CD8-positive, alpha-beta T cell (primary cell): ENCODE measurements at regions of chr1 and their contacts with region 1.

Region 1: DNA sequence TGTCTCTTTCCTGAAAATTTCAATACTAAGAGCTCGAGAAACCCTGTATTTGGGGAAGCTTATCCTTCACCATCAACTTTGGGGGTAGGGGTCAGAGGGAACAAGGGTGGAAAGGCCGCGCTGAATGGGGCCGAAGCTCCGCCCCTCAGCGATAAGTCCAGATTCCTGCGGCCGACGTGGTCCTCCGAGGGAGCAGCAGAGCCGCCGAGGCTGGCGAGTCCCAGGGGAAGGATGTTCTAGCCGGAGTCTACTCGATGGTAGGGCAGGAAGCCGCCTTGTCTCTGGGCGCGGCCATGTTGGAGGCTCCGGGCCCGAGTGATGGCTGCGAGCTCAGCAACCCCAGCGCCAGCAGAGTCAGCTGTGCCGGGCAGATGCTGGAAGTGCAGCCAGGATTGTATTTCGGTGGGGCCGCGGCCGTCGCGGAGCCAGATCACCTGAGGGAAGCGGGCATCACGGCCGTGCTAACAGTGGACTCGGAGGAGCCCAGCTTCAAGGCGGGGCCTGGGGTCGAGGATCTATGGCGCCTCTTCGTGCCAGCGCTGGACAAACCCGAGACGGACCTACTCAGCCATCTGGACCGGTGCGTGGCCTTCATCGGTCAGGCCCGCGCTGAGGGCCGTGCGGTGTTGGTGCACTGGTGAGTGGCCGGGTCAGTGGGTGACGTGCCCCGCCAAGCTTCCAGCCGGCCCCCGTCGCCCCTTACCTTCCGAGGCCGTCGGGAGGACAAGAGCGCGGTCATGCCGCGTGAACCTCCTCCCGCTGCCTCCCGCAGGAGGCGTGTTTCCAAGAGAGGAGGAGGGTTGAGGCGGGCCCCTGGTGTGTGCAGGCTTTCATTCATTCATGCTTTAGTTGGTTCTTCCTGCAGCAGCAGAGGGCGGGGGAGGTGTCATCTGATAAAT is at the start of gene DUSP12:
- DNase-seq: peak; percentile 70 to 92 (median 85)
- ATAC-seq: peak; percentile 95
- H3K4me3 ChIP-seq: peak within 1 kb of the TSS; percentile 88 to 99
- H3K4me3 Mint-ChIP-seq: peak within 1 kb of the TSS; percentile 100
- H3K27ac ChIP-seq: peak within 1 kb of the TSS; percentile 68 to 76
- H3K27ac Mint-ChIP-seq: peak within 1 kb of the TSS; percentile 96
- H3K4me1 ChIP-seq: peaks cover 23% of the 10 kb centered on the region
- H3K4me1 Mint-ChIP-seq: peaks cover 41% of the 10 kb centered on the region
- H3K27me3 ChIP-seq: no peaks in the 10 kb centered on the region
- H3K27me3 Mint-ChIP-seq: peaks cover 6% of the 10 kb centered on the region
- CTCF ChIP-seq: no peak
- total RNA-seq, gene DUSP12: 27.9 to 31.1 TPM

Region 2: GRCh38 chr1:161738627-161739287 is 11.0 kb before region 1 on chr1:
- CTCF ChIA-PET with region 1: interaction called, 36 read pairs
- POLR2A ChIA-PET with region 1: interaction called, 10 read pairs
- intact Hi-C with region 1: no loop called
- DNase-seq: peak in 8 of 9 experiments; percentile 43 to 87 (median 68)
- ATAC-seq: peak; percentile 83
- H3K4me3 ChIP-seq: no peak overlapping the region
- H3K4me3 Mint-ChIP-seq: no peak overlapping the region
- H3K27ac ChIP-seq: peak overlapping the region in 1 of 2 experiments; percentile 53
- H3K27ac Mint-ChIP-seq: peak overlapping the region; percentile 42
- H3K4me1 ChIP-seq: peaks cover 25% of the 10 kb centered on the region
- H3K4me1 Mint-ChIP-seq: peaks cover 26% of the 10 kb centered on the region
- H3K27me3 ChIP-seq: no peaks in the 10 kb centered on the region
- H3K27me3 Mint-ChIP-seq: no peaks in the 10 kb centered on the region
- CTCF ChIP-seq: peak; percentile 27